ENCODE measurements at regions of chr17 and their contacts with region 1.

Region 1: GRCh38 chr17:57671667-57672632 is 73.1 kb downstream of the CCDC182 start:
- DNase-seq: peak; percentile 62 to 72
- ATAC-seq: peak; percentile 92

Region 2: DNA sequence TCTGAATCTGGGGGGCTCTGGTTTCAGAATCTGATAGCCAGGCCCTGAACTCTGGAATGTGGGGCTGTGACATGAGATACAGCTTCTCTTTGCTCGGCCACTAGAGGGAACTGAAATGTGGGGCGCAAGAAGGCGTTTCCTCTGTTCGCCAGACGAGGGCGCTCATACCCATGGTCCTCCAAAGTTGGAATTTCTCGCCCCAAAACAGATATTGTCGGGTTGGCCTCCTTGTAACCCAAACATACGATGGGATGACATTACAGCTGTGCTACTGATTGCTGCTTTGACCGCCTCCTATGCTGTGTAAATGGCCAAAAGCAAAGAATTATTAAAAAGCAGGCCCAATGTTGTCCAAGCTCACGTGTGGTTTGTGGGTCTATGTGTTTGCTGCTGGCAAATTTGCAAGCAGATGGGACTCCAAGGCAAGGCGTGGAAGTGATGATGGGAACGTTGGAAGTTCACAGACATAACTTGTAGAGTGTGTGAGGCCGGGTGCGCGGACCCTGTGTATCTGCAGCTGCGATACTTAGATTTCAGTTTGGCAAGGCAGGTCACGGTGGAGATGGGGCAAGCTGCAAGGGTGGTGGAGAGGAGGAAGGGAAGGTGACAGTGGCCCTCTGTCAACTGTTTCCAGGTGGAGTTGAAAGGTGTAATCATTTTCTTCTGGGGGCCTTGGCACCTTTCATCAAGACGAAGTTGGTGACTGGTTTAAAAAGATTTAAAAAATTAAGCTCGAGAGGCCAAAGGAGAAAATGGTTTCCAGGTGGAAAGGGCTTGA is 428.6 kb before region 1 on chr17:
- intact Hi-C with region 1: loop called (anchors 2 to 10 kb)
- DNase-seq: peak; percentile 34 to 74
- ATAC-seq: peak; percentile 85

Region 3: GRCh38 chr17:57589151-57590034 is 82.6 kb before region 1 on chr17:
- intact Hi-C with region 1: loop called in 1 of 2 experiments (anchors 5 kb)
- DNase-seq: no peak
- ATAC-seq: no peak

Region 4: DNA sequence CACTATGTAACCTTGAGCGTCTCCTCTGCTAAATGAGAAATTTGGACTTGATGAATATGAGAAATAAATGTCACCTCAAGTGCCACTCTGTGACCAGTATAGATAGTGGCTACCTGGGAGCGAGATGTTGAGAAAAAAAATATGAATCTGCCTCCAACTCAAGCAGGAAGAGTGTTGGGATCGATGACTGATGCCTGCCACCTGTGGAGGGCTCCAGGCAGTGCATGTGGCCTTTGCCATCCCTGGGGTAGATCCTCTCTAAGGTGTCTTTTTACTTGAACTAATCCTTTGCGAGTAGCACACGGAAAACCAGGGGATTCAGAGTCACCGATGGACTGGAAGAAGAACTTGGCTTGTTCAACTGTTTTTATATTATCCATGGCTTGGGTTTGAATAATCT is 63.8 kb after region 1 on chr17:
- intact Hi-C with region 1: no loop called
- DNase-seq: no peak
- ATAC-seq: no peak